Sigmoid colon (tissue), 7 donors: ENCODE measurements at regions of chr10 and their contacts with region 1.

Region 1: GRCh38 chr10:123821136-123821535 is 70.5 kb downstream of the CPXM2 start:
- DNase-seq: no peak
- H3K4me3 ChIP-seq: no peak overlapping the region
- H3K27ac ChIP-seq: peak overlapping the region in 2 of 4 donors; percentile 9 to 42
- H3K4me1 ChIP-seq: peaks cover 0 to 39% (median 27%) of the 10 kb centered on the region in 4 donors
- H3K27me3 ChIP-seq: no peaks in the 10 kb centered on the region
- CTCF ChIP-seq: no peak
- EP300 ChIP-seq: no peak
- POLR2A ChIP-seq: no peak

Region 2: DNA sequence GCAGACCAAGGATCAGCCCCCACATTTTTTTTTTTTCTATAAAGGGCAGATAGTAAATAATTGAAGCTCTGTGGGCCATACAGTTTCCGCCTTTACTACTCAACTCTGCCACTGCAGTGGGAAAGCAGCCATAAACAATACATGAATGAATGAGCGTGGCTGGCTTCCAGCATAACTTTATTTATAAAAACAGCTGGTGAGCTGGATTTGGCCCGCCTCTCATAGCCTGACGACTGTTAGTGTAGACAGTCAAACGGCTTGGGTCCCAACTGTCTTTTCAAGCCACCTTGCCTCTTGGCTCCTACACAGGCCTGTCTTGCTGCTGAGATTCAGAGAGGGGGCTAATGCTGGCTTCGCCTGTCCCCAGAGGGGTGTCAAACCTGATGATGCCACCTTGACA is 324.8 kb before region 1 on chr10:
- intact Hi-C with region 1: no loop called
- DNase-seq: no peak
- H3K4me3 ChIP-seq: no peak overlapping the region
- H3K27ac ChIP-seq: no peak overlapping the region
- H3K4me1 ChIP-seq: no peaks in the 10 kb centered on the region
- H3K27me3 ChIP-seq: peaks cover 0 to 4% (median 0%) of the 10 kb centered on the region in 3 donors
- CTCF ChIP-seq: no peak
- EP300 ChIP-seq: no peak
- POLR2A ChIP-seq: no peak

Region 3: DNA sequence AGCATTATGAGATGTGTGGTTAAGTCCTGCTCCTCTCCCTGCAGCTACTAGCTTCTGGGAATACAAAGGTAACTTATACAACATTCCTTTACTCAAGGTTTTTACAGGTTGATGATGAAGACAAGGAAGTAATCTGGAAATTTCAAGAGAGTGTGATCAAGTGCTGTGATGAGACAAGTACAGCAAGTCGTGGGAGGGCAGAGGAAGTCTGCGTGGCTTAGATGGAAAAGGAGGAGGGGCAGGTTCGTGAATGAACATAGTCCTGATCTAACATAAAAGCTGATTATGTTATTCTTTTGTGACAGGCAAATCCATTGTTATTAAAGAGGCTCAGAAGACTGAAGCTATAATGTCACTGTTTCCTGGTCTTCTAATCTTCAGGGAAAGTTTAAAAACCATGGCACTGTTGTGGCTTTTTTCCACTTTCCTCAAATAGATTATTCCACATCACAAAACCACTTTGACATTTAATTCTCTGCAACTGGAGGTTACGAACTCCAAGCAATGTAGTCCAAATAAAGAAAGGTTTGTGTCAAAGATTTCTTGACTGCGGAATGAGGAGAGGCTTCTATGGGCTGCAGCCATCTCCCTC is 13.6 kb before region 1 on chr10:
- intact Hi-C with region 1: loop called (anchors 2 kb)
- DNase-seq: no peak
- H3K4me3 ChIP-seq: no peak overlapping the region
- H3K27ac ChIP-seq: peak overlapping the region; percentile 37 to 81 (median 71)
- H3K4me1 ChIP-seq: peaks cover 0 to 46% (median 26%) of the 10 kb centered on the region in 4 donors
- H3K27me3 ChIP-seq: no peaks in the 10 kb centered on the region
- CTCF ChIP-seq: no peak
- EP300 ChIP-seq: no peak
- POLR2A ChIP-seq: no peak